HEK293 (cell line): ENCODE measurements at regions of chr20 and their contacts with region 1.

Region 1: GRCh38 chr20:4244700-4245485 is 229.5 kb upstream of the RNF24 start:
- H3K4me3 ChIP-seq: no peak overlapping the region
- H3K27ac ChIP-seq: no peak overlapping the region
- H3K4me1 ChIP-seq: no peaks in the 10 kb centered on the region; the same call in 1 of the 2 replicates
- CTCF ChIP-seq: no peak

Region 2: DNA sequence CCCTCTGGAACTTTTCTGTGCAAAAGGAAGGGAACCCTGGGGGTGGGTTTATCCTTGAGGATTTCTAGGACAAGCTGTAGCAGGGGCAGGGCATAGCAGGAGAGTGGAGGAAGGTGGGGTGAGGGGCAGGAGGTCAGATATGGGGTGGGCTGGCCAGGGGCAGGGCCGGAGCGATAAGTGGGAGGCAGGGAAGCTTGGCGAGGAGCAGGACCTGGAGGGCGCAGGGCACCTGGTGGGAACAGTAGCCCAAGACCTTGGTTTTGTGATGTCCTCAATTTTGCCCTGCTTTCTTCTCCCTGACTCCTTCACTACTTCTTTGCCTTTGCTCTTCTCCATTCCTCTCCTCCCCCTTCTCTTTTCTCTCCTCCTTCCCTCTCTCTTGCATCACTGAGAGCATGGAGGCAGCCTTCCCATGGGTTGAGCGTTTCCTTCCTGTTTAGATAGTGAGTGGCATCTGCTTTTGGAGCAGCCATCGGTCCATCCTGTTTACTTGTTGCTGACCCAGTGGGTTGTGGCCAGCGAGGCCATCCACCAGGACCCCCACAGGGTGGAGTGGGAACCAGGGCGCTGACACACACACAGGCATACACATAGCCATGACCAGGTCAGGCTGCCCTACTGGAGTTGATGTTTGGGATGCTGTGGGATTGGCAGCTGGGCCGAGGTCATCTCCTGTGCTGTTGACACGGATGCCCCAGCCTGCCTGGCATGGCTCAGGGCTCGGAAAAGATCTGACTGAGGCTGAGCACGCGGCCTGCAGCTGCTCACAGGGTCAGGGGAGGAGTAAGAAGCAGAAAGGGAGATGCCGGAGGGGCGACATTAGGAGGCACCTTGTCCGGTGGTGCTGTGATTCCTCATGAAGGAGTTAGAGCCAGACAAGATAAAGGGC is 108.6 kb before region 1 on chr20:
- CTCF ChIA-PET with region 1: no interaction called
- POLR2A ChIA-PET with region 1: no interaction called
- H3K4me3 ChIP-seq: no peak overlapping the region
- H3K27ac ChIP-seq: no peak overlapping the region
- H3K4me1 ChIP-seq: peaks cover 20% of the 10 kb centered on the region
- CTCF ChIP-seq: no peak

Region 3: DNA sequence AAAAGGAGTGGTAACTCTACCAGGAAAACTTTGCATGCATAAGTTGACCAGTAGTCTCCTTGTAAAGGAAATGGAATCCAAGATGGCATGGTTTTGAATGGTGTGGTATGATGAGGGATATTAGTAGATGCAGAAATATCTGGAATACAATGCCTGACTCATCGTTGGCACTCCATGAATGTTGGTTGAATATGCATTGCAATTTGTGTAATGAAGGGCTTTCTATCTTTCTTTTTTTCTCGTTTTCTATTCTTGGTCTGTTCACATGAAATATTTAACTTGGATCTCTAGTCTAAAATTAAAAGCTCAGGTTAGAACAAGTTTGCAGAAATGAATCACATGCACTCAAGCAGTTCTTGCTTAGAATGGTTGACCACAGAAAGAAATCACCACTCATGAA is 199.5 kb after region 1 on chr20:
- CTCF ChIA-PET with region 1: no interaction called
- POLR2A ChIA-PET with region 1: no interaction called
- H3K4me3 ChIP-seq: no peak overlapping the region
- H3K27ac ChIP-seq: no peak overlapping the region
- H3K4me1 ChIP-seq: no peaks in the 10 kb centered on the region
- CTCF ChIP-seq: no peak

Region 4: DNA sequence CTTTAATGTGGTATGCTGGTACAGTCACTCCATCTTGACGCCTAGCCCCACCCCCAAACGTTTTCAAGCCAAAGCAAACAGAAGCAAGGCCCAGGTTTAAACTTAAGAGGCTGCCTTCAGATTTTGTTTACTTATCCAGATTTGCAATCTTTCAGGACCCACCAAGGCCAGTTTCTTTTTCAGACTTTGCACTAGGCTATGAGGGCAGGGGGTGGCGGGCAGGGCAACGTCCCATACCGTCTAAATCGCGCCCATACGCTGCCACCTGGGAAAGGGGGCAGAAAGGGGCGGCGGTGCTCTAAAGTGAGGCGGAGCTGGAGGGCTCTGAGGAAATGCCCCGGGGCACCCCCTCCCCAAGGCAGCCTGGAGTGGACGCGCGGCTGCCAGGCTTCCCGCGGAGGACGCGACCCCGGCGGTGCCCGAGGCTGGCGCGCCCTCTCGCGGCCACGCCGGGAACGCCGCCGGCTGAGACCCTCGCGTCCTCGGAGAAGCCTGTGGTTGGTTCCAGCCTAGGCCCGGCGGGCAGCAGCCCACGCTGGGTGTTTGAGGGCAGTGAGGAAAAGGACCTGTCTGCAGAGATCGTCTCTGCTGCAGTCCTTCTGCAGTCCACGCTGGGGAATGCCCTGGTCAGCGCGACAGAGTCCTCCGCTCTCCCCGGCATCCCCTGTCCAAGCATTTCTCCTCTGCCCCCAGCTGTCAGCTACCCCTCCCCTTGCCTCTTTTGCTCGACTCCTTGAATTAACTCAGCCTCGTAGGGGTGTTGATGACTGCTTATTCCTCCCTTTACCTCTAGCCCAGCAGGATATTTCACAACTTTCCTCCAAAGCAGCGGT is 347.6 kb after region 1 on chr20:
- CTCF ChIA-PET with region 1: interaction called, 11 read pairs
- POLR2A ChIA-PET with region 1: no interaction called
- H3K4me3 ChIP-seq: peak overlapping the region; percentile 34
- H3K27ac ChIP-seq: no peak overlapping the region; the same call in 1 of the 2 replicates
- H3K4me1 ChIP-seq: peaks cover 3% of the 10 kb centered on the region; the same call in 1 of the 2 replicates
- CTCF ChIP-seq: peak; percentile 85